ENCODE measurements at regions of chr19 and their contacts with region 1.

Region 1: DNA sequence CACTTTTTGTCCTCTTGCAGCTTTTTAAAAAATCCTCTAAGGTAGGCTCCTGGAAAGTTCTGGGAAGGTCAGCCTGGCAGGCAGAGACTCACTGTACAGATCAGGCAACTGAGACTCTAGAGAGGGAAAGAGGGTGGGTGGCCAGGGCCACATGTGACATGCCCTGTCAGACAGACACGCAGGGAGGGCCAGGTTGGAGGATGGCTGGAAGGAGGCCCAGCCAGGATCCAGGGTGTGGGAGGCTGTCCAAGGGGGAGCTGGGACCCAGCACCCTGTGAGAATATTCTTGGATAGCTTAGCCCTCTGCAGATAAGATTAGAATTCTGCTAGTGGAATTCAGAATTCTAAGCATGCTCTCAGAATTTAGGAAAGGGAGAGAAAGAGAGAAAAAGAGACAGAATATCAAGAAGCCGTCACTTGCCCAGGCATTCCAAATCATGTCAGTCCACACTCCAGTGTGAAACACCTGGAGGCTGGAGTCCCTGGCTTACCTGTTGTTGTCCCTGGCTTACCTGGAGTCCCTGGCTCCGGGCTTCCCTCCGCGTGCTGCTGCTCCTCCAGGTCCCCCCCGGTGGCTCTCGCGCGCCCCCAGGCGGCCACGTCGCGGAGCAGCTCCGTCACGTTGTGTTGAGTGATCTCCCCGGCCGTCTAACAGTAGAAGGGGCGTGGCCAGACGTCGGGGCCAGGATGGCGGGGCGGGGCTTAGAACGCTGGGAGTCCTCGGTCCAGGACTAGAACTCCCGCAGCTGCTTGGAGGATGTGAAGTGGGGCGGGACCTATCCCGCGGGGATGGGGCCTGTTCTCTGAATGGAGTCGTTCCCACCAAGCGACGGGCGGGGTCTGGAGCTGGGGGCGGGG is 2.8 kb upstream of the TNNI3 start:
- DNase-seq: peak; percentile 95 to 98
- ATAC-seq: peak; percentile 66 to 85
- H3K4me3 ChIP-seq: 0 out of 3 replicates have a peak overlapping the region, but pooled peaks have one; percentile 10
- H3K27ac ChIP-seq: peak overlapping the region in 1 of 2 experiments; percentile 69; a peak in 3 of 6 replicates
- H3K4me1 ChIP-seq: peaks cover 22% of the 10 kb centered on the region
- CTCF ChIP-seq: peak; percentile 98
- EP300 ChIP-seq: no peak
- POLR2A ChIP-seq: no peak
- RAD21 ChIP-seq: peak; percentile 90

Region 2: DNA sequence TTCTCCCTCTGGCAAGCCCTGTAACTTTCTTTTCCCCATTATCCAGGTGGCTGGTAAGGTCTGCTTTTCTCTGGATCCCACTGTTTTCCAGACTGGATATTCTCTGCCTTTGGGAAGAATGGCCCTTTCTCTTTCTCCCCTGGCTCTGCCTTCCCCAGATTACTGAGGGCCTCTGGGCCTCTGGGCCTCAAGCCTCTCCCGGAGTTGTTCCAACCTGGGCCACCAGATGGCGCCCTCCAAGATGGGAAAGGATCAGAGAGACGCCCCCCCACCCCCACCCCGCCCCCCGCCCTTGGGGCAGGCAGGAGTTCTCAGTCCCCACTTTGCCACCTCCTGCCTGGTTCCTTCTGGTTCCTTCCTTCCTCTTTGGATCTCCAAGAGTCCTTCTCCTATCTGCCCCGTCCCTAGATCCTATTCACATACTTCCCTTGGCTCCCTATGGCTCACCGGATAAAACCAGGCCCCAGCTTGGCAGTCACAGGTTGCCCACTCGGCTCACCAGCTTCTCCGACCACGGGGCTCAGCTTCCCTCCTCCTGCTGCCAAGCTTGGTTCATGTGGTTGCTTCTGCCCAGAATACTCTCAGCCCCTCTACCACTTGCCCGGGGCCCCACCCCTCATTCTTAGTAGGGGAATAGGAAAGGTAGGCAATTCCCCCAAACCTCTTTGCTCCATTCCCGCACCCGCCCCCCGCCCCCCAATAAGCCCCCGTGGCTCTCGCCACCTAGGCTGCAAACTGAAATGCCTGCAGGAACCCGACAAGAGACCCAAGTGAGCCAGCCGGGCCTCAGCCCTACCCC is 71.6 kb before region 1 on chr19:
- CTCF ChIA-PET with region 1: interaction called, 44 read pairs
- POLR2A ChIA-PET with region 1: interaction called, 3 read pairs
- DNase-seq: peak; percentile 71 to 81
- ATAC-seq: peak; percentile 52 to 79
- H3K4me3 ChIP-seq: no peak overlapping the region
- H3K27ac ChIP-seq: no peak overlapping the region
- H3K4me1 ChIP-seq: no peaks in the 10 kb centered on the region
- CTCF ChIP-seq: peak; percentile 93
- EP300 ChIP-seq: no peak
- POLR2A ChIP-seq: no peak
- RAD21 ChIP-seq: peak; percentile 33 to 51; a peak in 3 of 5 replicates

Region 3: DNA sequence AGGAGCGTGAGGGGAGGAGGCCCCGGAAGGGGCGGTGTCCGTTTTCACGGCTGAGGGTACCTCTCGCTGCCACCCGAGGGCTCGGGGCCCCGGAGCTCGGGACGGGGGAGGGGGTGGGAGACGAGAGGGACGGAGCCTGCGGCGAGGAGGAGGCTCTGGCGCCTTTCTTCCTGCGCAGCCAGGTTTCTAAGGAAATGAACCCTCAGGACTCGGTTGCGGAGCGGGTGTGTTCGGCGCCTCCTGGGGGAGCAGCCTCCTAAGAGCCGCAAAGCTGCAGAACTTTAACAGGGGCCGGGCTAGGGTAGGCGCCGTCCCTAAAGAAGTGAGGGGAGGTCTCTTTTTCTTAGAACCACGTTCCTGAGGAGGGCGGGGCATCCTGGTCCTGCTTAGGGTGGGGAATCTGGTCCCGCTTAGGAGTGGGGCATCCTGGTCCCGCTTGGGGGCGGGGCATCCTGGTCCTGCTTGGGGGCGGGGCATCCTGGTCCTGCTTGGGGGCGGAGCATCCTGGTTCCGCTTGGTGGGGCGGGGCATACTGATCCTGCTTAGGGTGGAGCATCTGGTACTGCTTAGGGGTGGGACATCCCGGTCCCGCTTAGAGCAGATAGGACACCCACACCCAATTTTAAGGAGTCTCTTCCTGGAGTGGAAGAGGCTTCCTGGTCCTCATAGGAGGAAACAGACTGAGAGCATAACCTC is 13.5 kb after region 1 on chr19:
- CTCF ChIA-PET with region 1: interaction called, 64 read pairs
- POLR2A ChIA-PET with region 1: interaction called, 3 read pairs
- DNase-seq: peak; percentile 93 to 95
- ATAC-seq: peak; percentile 62 to 86
- H3K4me3 ChIP-seq: peak overlapping the region; percentile 54
- H3K27ac ChIP-seq: peak overlapping the region; percentile 74 to 93
- H3K4me1 ChIP-seq: peaks cover 14% of the 10 kb centered on the region
- CTCF ChIP-seq: no peak
- EP300 ChIP-seq: no peak
- POLR2A ChIP-seq: peak; percentile 28; the same call in 1 of the 2 replicates
- RAD21 ChIP-seq: no peak

Region 4: GRCh38 chr19:55206664-55207500 is 46.5 kb after region 1 on chr19:
- CTCF ChIA-PET with region 1: interaction called, 10 read pairs
- POLR2A ChIA-PET with region 1: no interaction called
- DNase-seq: peak; percentile 93 to 100
- ATAC-seq: peak; percentile 82 to 88
- H3K4me3 ChIP-seq: peak overlapping the region; percentile 30
- H3K27ac ChIP-seq: peak overlapping the region; percentile 62 to 83
- H3K4me1 ChIP-seq: peaks cover 43% of the 10 kb centered on the region
- CTCF ChIP-seq: no peak
- EP300 ChIP-seq: no peak
- POLR2A ChIP-seq: no peak; the same call in 1 of the 2 replicates
- RAD21 ChIP-seq: no peak

Region 5: GRCh38 chr19:55258828-55259539 is 98.6 kb after region 1 on chr19 and contains the start of gene PPP6R1:
- CTCF ChIA-PET with region 1: interaction called, 22 read pairs
- POLR2A ChIA-PET with region 1: interaction called, 5 read pairs
- DNase-seq: peak; percentile 99 to 100
- ATAC-seq: peak; percentile 83 to 93
- H3K4me3 ChIP-seq: peak within 1 kb of the TSS; percentile 81
- H3K27ac ChIP-seq: peak within 1 kb of the TSS; percentile 87 to 95
- H3K4me1 ChIP-seq: peaks cover 36% of the 10 kb centered on the region
- CTCF ChIP-seq: no peak
- EP300 ChIP-seq: peak in 1 of 2 experiments; percentile 31; a peak in 1 of 5 replicates
- POLR2A ChIP-seq: peak; percentile 87
- RAD21 ChIP-seq: peak; percentile 44 to 61; a peak in 4 of 5 replicates
- polyA plus RNA-seq, gene PPP6R1: 42.9 and 44.6 TPM in 2 replicates

Region 6: GRCh38 chr19:55312621-55313512 is 152.5 kb after region 1 on chr19:
- CTCF ChIA-PET with region 1: no interaction called
- POLR2A ChIA-PET with region 1: no interaction called
- DNase-seq: no peak
- ATAC-seq: peak; percentile 10 to 16; a peak in 3 of 6 replicates
- H3K4me3 ChIP-seq: no peak overlapping the region
- H3K27ac ChIP-seq: no peak overlapping the region
- H3K4me1 ChIP-seq: no peaks in the 10 kb centered on the region
- CTCF ChIP-seq: no peak
- EP300 ChIP-seq: no peak
- POLR2A ChIP-seq: no peak
- RAD21 ChIP-seq: no peak

Measured in A549 (cell line).